ENCODE measurements at regions of chr5 and their contacts with region 1.

Region 1: GRCh38 chr5:150436141-150436680 is 13.3 kb downstream of the RPS14 start:
- DNase-seq: peak; percentile 73
- H3K4me3 ChIP-seq: no peak overlapping the region
- H3K27ac ChIP-seq: no peak overlapping the region
- H3K4me1 ChIP-seq: peaks cover 9% of the 10 kb centered on the region
- H3K27me3 ChIP-seq: no peaks in the 10 kb centered on the region
- CTCF ChIP-seq: peak; percentile 74 to 84

Region 2: DNA sequence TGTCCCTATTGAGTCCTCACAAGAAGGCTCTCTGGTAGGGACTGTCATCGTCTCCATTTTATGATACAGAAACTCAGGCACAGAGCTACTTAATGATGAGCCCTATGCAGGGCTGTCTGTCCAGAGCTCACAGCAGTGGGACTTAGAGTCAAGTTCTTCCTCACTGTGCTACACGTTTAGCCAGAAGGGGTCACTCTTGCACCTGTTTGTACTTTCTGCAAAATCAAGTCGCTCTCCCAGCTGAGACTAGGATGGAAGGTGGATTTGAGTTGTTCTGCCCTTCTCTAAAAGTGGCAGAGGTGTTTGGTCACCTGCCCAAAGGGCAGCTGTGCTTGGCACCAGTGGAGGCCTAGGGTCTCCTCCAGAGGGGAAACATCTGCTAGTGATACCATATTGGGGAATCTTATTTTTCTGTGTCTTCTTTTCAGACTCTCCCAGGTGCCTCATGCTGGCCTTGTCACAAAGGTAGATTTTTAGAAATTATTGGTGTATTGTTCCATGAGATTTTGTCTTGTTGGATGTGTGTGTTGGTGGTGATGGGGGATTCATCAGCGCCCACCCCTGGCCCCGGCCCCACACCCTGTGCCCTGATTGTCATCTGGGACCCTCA is 601.9 kb before region 1 on chr5:
- CTCF ChIA-PET with region 1: interaction called, 3 read pairs
- dilution Hi-C with region 1: no loop called
- in situ Hi-C with region 1: no loop called
- intact Hi-C with region 1: loop called (anchors 10 kb)
- DNase-seq: peak; percentile 62
- H3K4me3 ChIP-seq: no peak overlapping the region
- H3K27ac ChIP-seq: no peak overlapping the region
- H3K4me1 ChIP-seq: peaks cover 8% of the 10 kb centered on the region
- H3K27me3 ChIP-seq: no peaks in the 10 kb centered on the region
- CTCF ChIP-seq: peak; percentile 75 to 79

Region 3: GRCh38 chr5:150129813-150130492 is 306.3 kb before region 1 on chr5:
- CTCF ChIA-PET with region 1: no interaction called
- dilution Hi-C with region 1: no loop called
- in situ Hi-C with region 1: no loop called
- intact Hi-C with region 1: loop called (anchors 1 kb)
- DNase-seq: peak; percentile 59
- H3K4me3 ChIP-seq: peak overlapping the region in 1 of 3 experiments; percentile 35
- H3K27ac ChIP-seq: no peak overlapping the region
- H3K4me1 ChIP-seq: peaks cover 17% of the 10 kb centered on the region
- H3K27me3 ChIP-seq: no peaks in the 10 kb centered on the region
- CTCF ChIP-seq: peak; percentile 95 to 98

Region 4: GRCh38 chr5:150161242-150162141 is 274.7 kb before region 1 on chr5:
- CTCF ChIA-PET with region 1: no interaction called
- dilution Hi-C with region 1: no loop called
- in situ Hi-C with region 1: loop called in 1 of 2 experiments (anchors 10 kb)
- intact Hi-C with region 1: loop called (anchors 1 kb)
- DNase-seq: peak; percentile 55
- H3K4me3 ChIP-seq: no peak overlapping the region
- H3K27ac ChIP-seq: no peak overlapping the region
- H3K4me1 ChIP-seq: no peaks in the 10 kb centered on the region
- H3K27me3 ChIP-seq: no peaks in the 10 kb centered on the region
- CTCF ChIP-seq: peak; percentile 96 to 98

Region 5: GRCh38 chr5:150272526-150272925 is 163.7 kb before region 1 on chr5:
- CTCF ChIA-PET with region 1: no interaction called
- dilution Hi-C with region 1: no loop called
- in situ Hi-C with region 1: no loop called
- intact Hi-C with region 1: loop called (anchors 1 kb)
- DNase-seq: peak; percentile 46
- H3K4me3 ChIP-seq: no peak overlapping the region
- H3K27ac ChIP-seq: no peak overlapping the region
- H3K4me1 ChIP-seq: peaks cover 5% of the 10 kb centered on the region
- H3K27me3 ChIP-seq: no peaks in the 10 kb centered on the region
- CTCF ChIP-seq: peak; percentile 53 to 78

Region 6: GRCh38 chr5:150357326-150358260 is 78.6 kb before region 1 on chr5 and contains the start of gene TCOF1:
- CTCF ChIA-PET with region 1: no interaction called
- dilution Hi-C with region 1: no loop called
- in situ Hi-C with region 1: loop called in 1 of 2 experiments (anchors 10 kb)
- intact Hi-C with region 1: loop called (anchors 1 kb)
- DNase-seq: peak; percentile 96
- H3K4me3 ChIP-seq: peak within 1 kb of the TSS; percentile 83 to 88 (median 85)
- H3K27ac ChIP-seq: peak within 1 kb of the TSS; percentile 83
- H3K4me1 ChIP-seq: peaks cover 9% of the 10 kb centered on the region
- H3K27me3 ChIP-seq: no peaks in the 10 kb centered on the region
- CTCF ChIP-seq: no peak
- total RNA-seq, gene TCOF1: 17.7 to 70.4 TPM

Measured in mammary epithelial cell (primary cell).